Endothelial cell of umbilical vein (primary cell): ENCODE measurements at regions of chr11 and their contacts with region 1.

Region 1: DNA sequence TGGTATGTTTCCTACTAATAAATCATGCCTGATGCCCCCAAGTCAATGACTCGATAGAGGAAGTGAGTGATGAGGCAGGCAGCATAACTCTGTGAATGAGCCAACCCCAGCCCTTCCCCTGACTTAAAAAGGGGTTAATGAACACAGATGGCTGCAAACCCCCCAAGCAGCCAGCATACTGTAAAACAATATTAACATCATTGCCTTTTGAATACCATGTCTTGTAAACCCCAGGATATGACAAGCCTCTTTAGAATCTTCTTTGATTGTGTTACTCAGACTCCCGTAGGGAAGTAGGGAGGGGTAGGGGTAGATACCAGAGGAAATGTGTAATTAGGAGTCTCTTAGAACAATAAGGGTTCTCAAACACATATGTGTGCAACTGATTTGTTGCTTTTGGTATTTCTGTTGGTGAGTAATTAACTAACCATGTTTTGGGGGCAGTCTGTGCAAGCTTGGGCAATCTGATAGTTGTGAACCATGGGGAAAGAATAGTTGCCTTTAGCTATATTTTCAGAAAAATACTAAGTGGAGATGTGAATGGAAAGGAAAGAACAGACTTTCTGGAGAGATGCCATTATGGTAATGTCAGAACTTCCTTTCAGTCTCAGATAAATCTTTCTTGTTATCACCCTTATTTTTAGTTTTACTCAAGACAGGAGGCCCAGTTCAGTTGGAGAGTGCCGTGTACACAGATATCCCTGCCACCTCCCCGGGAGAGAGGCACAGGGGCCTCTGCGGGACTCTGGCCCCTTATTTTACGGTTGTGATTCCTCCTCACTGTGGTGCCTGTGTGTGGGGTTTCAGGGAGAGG is 701.8 kb downstream of the NTM start:
- DNase-seq: peak; percentile 96
- H3K4me3 ChIP-seq: no peak overlapping the region
- H3K27ac ChIP-seq: peak overlapping the region; percentile 99
- H3K4me1 ChIP-seq: peaks cover 32% of the 10 kb centered on the region
- H3K27me3 ChIP-seq: no peaks in the 10 kb centered on the region
- CTCF ChIP-seq: no peak
- POLR2A ChIP-seq: peak; percentile 68

Region 2: DNA sequence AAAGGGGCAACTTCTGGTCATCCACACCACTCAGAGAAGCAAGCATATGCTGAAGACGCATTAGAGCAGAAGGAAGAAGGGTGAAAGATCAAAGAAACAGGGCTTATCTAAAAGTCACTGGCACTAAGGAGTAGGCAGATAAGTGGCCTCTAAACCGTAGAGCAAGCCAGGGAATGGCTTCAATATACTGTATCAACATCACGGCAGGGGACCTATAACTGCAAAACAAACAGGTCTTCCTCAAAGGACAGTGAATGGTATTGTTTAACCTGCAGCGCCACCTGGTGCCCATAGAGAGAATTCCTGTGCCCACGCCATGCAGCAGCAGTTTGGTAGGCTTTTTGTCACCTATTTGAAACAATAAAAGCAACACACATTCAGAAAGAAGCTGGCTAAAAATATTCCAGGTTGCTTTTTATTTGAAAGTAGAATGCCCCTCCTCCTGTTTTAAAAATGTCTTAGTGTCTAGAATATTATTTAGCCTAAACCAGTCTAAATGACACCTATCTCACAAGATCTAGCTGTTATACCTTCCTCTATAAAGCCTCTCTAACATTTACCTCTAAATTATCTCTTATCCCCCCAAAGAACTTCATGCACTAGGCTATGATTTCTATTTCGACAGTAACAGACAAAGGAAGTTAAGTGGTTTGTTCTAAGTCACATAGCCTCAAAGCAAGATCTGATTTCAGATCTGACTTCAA is 1177.8 kb before region 1 on chr11:
- CTCF ChIA-PET with region 1: no interaction called
- POLR2A ChIA-PET with region 1: no interaction called
- dilution Hi-C with region 1: no loop called
- intact Hi-C with region 1: loop called (anchors 5 kb)
- DNase-seq: peak; percentile 90
- H3K4me3 ChIP-seq: no peak overlapping the region
- H3K27ac ChIP-seq: peak overlapping the region; percentile 13
- H3K4me1 ChIP-seq: peaks cover 57% of the 10 kb centered on the region
- H3K27me3 ChIP-seq: no peaks in the 10 kb centered on the region
- CTCF ChIP-seq: peak; percentile 72 to 86
- POLR2A ChIP-seq: no peak

Region 3: GRCh38 chr11:131859538-131860210 is 212.6 kb before region 1 on chr11:
- CTCF ChIA-PET with region 1: no interaction called
- POLR2A ChIA-PET with region 1: no interaction called
- dilution Hi-C with region 1: no loop called
- intact Hi-C with region 1: loop called (anchors 1 kb)
- DNase-seq: peak; percentile 90
- H3K4me3 ChIP-seq: no peak overlapping the region
- H3K27ac ChIP-seq: peak overlapping the region; percentile 93
- H3K4me1 ChIP-seq: peaks cover 54% of the 10 kb centered on the region
- H3K27me3 ChIP-seq: no peaks in the 10 kb centered on the region
- CTCF ChIP-seq: no peak
- POLR2A ChIP-seq: no peak

Region 4: GRCh38 chr11:131889146-131889577 is 183.1 kb before region 1 on chr11:
- CTCF ChIA-PET with region 1: no interaction called
- POLR2A ChIA-PET with region 1: no interaction called
- dilution Hi-C with region 1: no loop called
- intact Hi-C with region 1: loop called (anchors 1 kb)
- DNase-seq: no peak
- H3K4me3 ChIP-seq: no peak overlapping the region
- H3K27ac ChIP-seq: peak overlapping the region; percentile 45
- H3K4me1 ChIP-seq: peaks cover 13% of the 10 kb centered on the region
- H3K27me3 ChIP-seq: peaks cover 0 to 2% of the 10 kb centered on the region in 2 experiments
- CTCF ChIP-seq: no peak
- POLR2A ChIP-seq: no peak

Region 5: GRCh38 chr11:131944736-131945135 is 127.5 kb before region 1 on chr11:
- CTCF ChIA-PET with region 1: no interaction called
- POLR2A ChIA-PET with region 1: no interaction called
- dilution Hi-C with region 1: no loop called
- intact Hi-C with region 1: no loop called
- DNase-seq: no peak
- H3K4me3 ChIP-seq: no peak overlapping the region
- H3K27ac ChIP-seq: no peak overlapping the region
- H3K4me1 ChIP-seq: no peaks in the 10 kb centered on the region
- H3K27me3 ChIP-seq: no peaks in the 10 kb centered on the region
- CTCF ChIP-seq: no peak
- POLR2A ChIP-seq: no peak

Region 6: DNA sequence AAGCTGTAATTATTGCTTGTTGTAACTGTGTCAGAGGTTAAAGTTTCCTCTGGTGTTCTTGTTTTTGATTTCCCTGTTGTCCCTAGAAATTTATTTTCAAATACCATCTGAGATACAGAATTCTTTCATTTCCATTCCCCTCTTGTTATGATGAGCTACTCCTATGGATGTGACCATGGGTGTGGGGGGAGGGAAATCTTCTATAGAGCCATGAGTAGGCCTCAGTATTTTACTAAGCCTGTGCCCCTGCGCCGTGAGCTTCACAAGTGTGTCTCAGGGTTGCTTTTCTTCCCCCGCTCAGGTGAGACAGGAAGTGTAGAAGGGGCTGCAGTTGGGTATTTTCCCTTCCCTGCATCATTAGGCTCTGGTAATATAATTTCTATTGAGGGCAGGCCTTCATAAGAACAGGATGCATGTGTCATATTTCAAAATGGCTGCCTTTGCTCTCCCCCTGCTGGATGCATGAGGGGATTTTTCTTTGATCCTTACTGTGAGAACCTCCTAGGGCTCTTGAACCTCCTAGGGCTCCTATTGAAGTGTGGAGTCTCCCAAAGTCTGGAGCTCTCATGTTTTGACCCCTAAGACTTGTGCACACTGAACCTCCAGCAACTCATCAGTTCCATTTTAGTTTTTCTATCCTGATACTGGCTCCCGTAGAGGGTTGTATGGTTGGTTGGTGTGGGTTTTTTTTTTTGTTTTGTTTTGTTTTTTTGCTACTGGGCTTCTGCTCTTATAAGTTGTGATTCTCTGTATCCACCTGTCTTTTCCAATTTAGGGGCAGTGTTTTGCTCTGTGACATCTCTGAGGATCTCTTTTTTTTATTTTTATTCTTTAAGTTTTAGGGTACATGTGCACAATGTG is 43.6 kb before region 1 on chr11:
- CTCF ChIA-PET with region 1: interaction called, 6 read pairs
- POLR2A ChIA-PET with region 1: no interaction called
- dilution Hi-C with region 1: no loop called
- intact Hi-C with region 1: loop called (anchors 1 kb)
- DNase-seq: peak; percentile 74
- H3K4me3 ChIP-seq: no peak overlapping the region
- H3K27ac ChIP-seq: no peak overlapping the region
- H3K4me1 ChIP-seq: peaks cover 13% of the 10 kb centered on the region
- H3K27me3 ChIP-seq: no peaks in the 10 kb centered on the region
- CTCF ChIP-seq: peak; percentile 61 to 65
- POLR2A ChIP-seq: no peak

Region 7: DNA sequence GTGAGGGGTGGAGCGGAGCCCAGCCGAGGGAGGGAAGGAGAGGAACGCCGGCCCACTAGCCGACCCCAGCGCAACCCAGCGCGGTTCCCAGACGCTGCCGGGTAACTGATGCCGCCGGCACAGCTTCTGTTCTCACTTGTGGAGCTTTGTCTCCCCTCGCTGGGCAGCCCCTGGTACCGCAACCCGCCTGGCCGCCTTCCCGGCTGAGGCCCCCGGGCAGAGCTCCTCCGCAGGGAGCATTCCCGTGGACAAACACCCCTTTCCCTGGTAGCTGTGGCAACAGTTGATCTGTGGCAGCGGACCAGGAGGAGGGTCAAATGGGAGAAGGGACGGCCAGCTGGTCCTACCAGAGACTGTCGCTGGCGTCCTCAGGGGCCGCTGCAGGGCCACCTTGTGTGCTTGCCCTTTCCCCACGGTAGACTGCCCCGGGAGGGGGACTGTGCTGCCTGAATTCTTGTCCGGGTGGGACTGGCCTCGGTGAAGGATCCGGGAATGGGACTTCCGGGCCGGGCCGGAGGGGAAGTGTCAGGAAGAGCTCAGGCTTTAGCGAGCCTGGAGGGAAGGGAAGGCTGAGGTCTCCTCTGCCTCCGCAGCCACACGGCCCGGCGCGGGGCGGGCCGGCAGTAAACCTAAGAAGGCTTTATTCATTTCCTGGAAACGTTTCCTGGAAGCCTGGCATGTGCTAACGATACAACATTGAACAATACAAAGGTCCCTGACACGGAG is 992.1 kb after region 1 on chr11:
- CTCF ChIA-PET with region 1: no interaction called
- POLR2A ChIA-PET with region 1: no interaction called
- dilution Hi-C with region 1: no loop called
- intact Hi-C with region 1: loop called (anchors 1 kb)
- DNase-seq: peak; percentile 48
- H3K4me3 ChIP-seq: peak overlapping the region; percentile 14 to 64 (median 42)
- H3K27ac ChIP-seq: peak overlapping the region; percentile 12
- H3K4me1 ChIP-seq: peaks cover 8% of the 10 kb centered on the region
- H3K27me3 ChIP-seq: no peaks in the 10 kb centered on the region
- CTCF ChIP-seq: peak; percentile 63 to 68
- POLR2A ChIP-seq: no peak